HEK293 (cell line): ENCODE measurements at regions of chr7 and their contacts with region 1.

Region 1: DNA sequence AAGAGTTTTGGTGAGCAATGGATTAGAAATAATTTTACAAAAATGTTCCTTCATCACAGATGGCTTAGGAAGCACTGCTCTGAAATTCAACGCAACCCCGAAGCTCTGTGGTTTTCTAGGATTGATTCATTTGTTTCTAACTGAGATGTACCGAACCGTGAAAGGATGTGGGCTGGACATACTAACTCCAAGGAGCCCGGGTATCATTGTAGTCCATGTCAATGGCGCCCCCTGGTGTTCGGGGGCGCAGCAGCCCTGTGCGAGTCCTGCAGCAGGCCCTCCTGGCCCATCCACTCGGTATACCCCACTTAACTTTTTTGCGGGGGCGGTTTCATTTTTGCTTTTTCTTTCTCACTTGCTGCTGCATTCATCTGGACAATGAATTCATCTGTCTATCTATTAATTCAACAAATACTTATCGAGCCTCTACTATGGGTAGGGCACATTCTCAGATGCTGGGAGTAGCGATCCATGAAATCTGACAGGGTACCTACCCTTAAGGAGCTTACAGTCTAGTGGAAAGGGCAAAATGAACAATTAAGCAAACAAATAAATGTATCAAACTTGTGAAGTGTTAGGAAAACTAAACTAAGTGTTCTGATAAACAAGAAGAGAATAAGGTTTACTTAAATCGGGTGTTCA is 25.2 kb upstream of the ITPRID1 start:
- H3K4me3 ChIP-seq: no peak overlapping the region
- H3K27ac ChIP-seq: no peak overlapping the region
- H3K4me1 ChIP-seq: no peaks in the 10 kb centered on the region; the same call in 1 of the 2 replicates
- CTCF ChIP-seq: no peak

Region 2: DNA sequence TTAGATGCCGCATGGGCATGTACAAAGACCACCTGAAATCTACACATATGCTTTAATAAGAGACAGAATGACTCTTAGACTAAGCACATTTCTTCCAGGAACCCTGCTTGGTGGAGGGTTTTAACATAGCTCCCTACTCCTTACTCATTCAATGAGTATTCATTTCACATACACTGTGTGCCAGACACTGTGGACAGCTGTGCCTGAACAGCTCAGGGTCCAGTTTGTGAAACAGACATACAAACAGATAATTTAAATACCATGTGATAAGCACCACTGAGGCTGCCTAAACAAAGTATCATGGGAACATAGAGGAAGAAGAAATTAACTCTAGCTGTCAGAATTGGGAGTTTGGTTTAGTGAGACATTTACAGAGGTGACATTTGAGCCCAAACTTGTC is 40.0 kb before region 1 on chr7:
- CTCF ChIA-PET with region 1: interaction called, 16 read pairs
- POLR2A ChIA-PET with region 1: no interaction called
- H3K4me3 ChIP-seq: no peak overlapping the region
- H3K27ac ChIP-seq: no peak overlapping the region
- H3K4me1 ChIP-seq: no peaks in the 10 kb centered on the region
- CTCF ChIP-seq: no peak

Region 3: GRCh38 chr7:31500656-31501055 is 12.0 kb after region 1 on chr7:
- CTCF ChIA-PET with region 1: interaction called, 16 read pairs
- POLR2A ChIA-PET with region 1: no interaction called
- H3K4me3 ChIP-seq: no peak overlapping the region
- H3K27ac ChIP-seq: no peak overlapping the region
- H3K4me1 ChIP-seq: no peaks in the 10 kb centered on the region
- CTCF ChIP-seq: no peak

Region 4: GRCh38 chr7:31896925-31897324 is 408.2 kb after region 1 on chr7:
- CTCF ChIA-PET with region 1: interaction called, 12 read pairs
- POLR2A ChIA-PET with region 1: no interaction called
- H3K4me3 ChIP-seq: no peak overlapping the region
- H3K27ac ChIP-seq: no peak overlapping the region
- H3K4me1 ChIP-seq: 0 out of 2 replicates have a peak, but pooled peaks cover 2% of the 10 kb centered on the region
- CTCF ChIP-seq: no peak